Stomach (tissue), 19 donors: ENCODE measurements at regions of chr2 and their contacts with region 1.

Region 1: GRCh38 chr2:50401772-50402653 is 629.9 kb downstream of the NRXN1 start:
- DNase-seq: peak; percentile 59 to 83
- H3K4me3 ChIP-seq: no peak overlapping the region
- H3K27ac ChIP-seq: no peak overlapping the region
- H3K4me1 ChIP-seq: peaks cover 0 to 24% (median 0%) of the 10 kb centered on the region in 4 donors
- H3K27me3 ChIP-seq: no peaks in the 10 kb centered on the region
- CTCF ChIP-seq: peak in 5 of 7 experiments; percentile 47 to 80 (median 74)
- EP300 ChIP-seq: no peak
- POLR2A ChIP-seq: no peak

Region 2: GRCh38 chr2:48946449-48947048 is 1455.5 kb before region 1 on chr2:
- intact Hi-C with region 1: loop called (anchors 10 kb)
- DNase-seq: peak; percentile 51 to 84
- H3K4me3 ChIP-seq: no peak overlapping the region
- H3K27ac ChIP-seq: no peak overlapping the region
- H3K4me1 ChIP-seq: peaks cover 0 to 6% (median 0%) of the 10 kb centered on the region in 4 donors
- H3K27me3 ChIP-seq: no peaks in the 10 kb centered on the region
- CTCF ChIP-seq: peak in 5 of 7 experiments; percentile 85 to 95 (median 91)
- EP300 ChIP-seq: no peak
- POLR2A ChIP-seq: no peak